Caco-2 (cell line): ENCODE measurements at regions of chr17 and their contacts with region 1.

Region 1: DNA sequence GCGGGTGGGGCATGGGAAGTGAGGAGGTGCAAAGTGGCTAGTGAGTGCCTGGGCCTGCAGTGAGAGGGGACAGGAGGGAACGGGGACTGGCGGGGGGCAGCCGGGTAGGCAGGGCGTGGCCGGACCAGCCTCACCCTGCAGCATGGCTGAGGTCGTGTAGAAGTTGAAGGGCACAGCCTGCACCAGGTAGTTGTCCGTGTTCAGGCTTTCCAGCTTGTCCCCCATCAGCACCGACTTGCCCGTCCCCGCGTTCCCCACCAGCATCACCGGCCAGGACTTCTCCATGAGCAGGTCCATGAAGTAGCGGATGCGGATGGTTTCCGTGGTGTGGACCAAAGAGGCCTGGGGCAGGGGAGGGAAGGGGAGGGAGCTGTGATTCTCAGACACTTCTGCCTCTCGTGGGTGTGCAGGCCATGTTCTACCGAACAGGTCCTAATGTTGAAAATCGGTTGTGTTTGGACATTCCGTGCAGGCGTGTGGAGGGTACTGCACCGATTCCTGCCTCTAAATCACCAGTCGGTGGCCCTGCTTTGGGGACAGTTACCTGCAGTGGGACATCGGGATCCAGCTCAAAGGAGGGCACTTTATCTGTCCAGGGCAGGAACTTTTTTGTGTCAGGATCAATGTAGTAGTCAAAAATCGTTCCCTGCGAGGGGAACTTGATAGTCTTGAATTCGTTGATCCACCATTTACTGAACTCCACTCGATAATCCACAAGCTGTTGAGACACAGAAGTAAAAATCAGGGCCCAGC is 91.6 kb downstream of the DNAH17 start:
- DNase-seq: no peak
- H3K4me3 ChIP-seq: no peak overlapping the region
- H3K4me3 Mint-ChIP-seq: no peak overlapping the region
- H3K27ac Mint-ChIP-seq: no peak overlapping the region
- H3K4me1 ChIP-seq: no peaks in the 10 kb centered on the region
- H3K4me1 Mint-ChIP-seq: peaks cover 6% of the 10 kb centered on the region
- H3K27me3 ChIP-seq: no peaks in the 10 kb centered on the region
- H3K27me3 Mint-ChIP-seq: peaks cover 6% of the 10 kb centered on the region
- CTCF ChIP-seq: no peak

Region 2: GRCh38 chr17:78397681-78398101 is 87.9 kb before region 1 on chr17:
- CTCF ChIA-PET with region 1: no interaction called
- POLR2A ChIA-PET with region 1: no interaction called
- intact Hi-C with region 1: no loop called
- DNase-seq: no peak
- H3K4me3 ChIP-seq: no peak overlapping the region
- H3K4me3 Mint-ChIP-seq: no peak overlapping the region
- H3K27ac Mint-ChIP-seq: peak overlapping the region; percentile 64
- H3K4me1 ChIP-seq: peaks cover 11% of the 10 kb centered on the region
- H3K4me1 Mint-ChIP-seq: peaks cover 29% of the 10 kb centered on the region
- H3K27me3 ChIP-seq: no peaks in the 10 kb centered on the region
- H3K27me3 Mint-ChIP-seq: no peaks in the 10 kb centered on the region
- CTCF ChIP-seq: no peak

Region 3: DNA sequence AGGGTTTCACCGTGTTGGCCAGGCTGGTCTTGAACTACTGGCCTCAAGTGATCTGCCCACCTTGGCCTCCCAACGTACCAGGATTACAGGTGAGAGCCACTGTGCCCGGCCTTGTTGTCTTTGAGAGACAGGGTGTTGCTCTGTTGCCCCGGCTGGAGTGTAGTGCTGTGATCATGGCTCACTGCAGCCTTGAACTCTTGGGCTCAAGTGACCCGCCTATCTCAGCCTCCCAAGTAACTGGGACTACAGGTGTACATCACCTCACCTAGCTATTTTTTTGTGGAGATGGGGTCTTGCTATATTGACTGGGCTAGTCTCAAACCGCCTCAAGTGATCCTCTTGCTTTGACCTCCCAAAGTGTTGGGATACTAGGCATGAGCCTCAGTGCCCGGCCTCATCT is 38.8 kb before region 1 on chr17:
- CTCF ChIA-PET with region 1: no interaction called
- POLR2A ChIA-PET with region 1: interaction called, 12 read pairs
- intact Hi-C with region 1: no loop called
- DNase-seq: no peak
- H3K4me3 ChIP-seq: no peak overlapping the region
- H3K4me3 Mint-ChIP-seq: no peak overlapping the region
- H3K27ac Mint-ChIP-seq: no peak overlapping the region
- H3K4me1 ChIP-seq: no peaks in the 10 kb centered on the region
- H3K4me1 Mint-ChIP-seq: no peaks in the 10 kb centered on the region
- H3K27me3 ChIP-seq: no peaks in the 10 kb centered on the region
- H3K27me3 Mint-ChIP-seq: no peaks in the 10 kb centered on the region
- CTCF ChIP-seq: no peak